ENCODE measurements at regions of chr17 and their contacts with region 1.

Region 1: GRCh38 chr17:82351716-82352488 is 7.1 kb upstream of the TEX19 start:
- DNase-seq: peak; percentile 78 to 91 (median 84)
- ATAC-seq: peak; percentile 84
- H3K4me3 ChIP-seq: no peak overlapping the region
- H3K27ac ChIP-seq: no peak overlapping the region
- H3K4me1 ChIP-seq: peaks cover 5 to 6% of the 10 kb centered on the region in 2 donors
- H3K27me3 ChIP-seq: peaks cover 0 to 46% of the 10 kb centered on the region in 2 donors
- CTCF ChIP-seq: peak; percentile 87 to 98

Region 2: DNA sequence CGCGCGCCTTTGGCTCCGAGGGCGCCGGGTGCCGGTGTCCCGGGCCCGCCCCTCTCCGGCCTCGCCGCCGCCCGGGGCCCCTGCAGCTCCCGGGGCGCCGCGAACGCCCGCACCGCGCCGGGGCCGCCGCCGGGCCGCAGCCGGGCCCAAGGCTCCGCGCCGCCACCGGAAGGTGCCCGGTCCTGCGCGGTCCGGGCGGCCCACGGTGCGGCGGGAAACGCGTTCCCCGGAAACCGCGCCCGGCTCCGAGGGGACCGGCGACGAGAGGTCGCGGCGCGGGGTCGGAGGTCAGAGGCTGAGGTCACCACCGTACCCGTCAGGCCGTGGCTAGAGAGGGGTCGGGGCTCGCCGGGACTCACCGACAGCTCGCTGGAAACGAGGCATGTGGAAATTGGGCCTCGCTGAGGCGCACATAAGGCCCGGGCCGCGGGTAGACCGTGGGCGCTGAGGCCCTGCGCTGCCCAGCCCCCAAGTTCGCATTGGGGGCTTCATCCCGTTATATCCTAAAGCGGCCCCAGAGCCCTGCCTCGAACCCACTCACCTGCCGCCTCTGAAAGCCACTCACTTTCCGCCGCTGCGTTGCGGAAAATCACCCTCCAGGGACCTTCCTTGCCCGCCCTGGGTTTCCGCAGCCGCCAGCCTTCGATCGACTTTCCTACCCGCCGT is 286.1 kb before region 1 on chr17 and contains the start of gene DUS1L:
- intact Hi-C with region 1: no loop called
- DNase-seq: peak; percentile 48 to 90 (median 57)
- ATAC-seq: peak; percentile 90
- H3K4me3 ChIP-seq: peak within 1 kb of the TSS; percentile 76 to 91
- H3K27ac ChIP-seq: peak within 1 kb of the TSS; percentile 66 to 83
- H3K4me1 ChIP-seq: peaks cover 18 to 28% of the 10 kb centered on the region in 2 donors
- H3K27me3 ChIP-seq: no peaks in the 10 kb centered on the region
- CTCF ChIP-seq: no peak
- polyA plus RNA-seq, gene DUS1L: 55.7 to 95.8 (median 69.4) TPM

Region 3: GRCh38 chr17:82281502-82282238 is 70.2 kb before region 1 on chr17:
- intact Hi-C with region 1: no loop called
- DNase-seq: peak in 2 of 4 donors; percentile 69 to 84
- ATAC-seq: peak; percentile 92
- H3K4me3 ChIP-seq: no peak overlapping the region
- H3K27ac ChIP-seq: no peak overlapping the region
- H3K4me1 ChIP-seq: peaks cover 0 to 36% of the 10 kb centered on the region in 2 donors
- H3K27me3 ChIP-seq: no peaks in the 10 kb centered on the region
- CTCF ChIP-seq: no peak

Region 4: GRCh38 chr17:82292251-82293154 is 59.4 kb before region 1 on chr17:
- intact Hi-C with region 1: no loop called
- DNase-seq: peak; percentile 92 to 97 (median 95)
- ATAC-seq: peak; percentile 89
- H3K4me3 ChIP-seq: peak overlapping the region; percentile 79 to 85
- H3K27ac ChIP-seq: peak overlapping the region; percentile 92
- H3K4me1 ChIP-seq: peaks cover 4 to 68% of the 10 kb centered on the region in 2 donors
- H3K27me3 ChIP-seq: no peaks in the 10 kb centered on the region
- CTCF ChIP-seq: no peak

Region 5: DNA sequence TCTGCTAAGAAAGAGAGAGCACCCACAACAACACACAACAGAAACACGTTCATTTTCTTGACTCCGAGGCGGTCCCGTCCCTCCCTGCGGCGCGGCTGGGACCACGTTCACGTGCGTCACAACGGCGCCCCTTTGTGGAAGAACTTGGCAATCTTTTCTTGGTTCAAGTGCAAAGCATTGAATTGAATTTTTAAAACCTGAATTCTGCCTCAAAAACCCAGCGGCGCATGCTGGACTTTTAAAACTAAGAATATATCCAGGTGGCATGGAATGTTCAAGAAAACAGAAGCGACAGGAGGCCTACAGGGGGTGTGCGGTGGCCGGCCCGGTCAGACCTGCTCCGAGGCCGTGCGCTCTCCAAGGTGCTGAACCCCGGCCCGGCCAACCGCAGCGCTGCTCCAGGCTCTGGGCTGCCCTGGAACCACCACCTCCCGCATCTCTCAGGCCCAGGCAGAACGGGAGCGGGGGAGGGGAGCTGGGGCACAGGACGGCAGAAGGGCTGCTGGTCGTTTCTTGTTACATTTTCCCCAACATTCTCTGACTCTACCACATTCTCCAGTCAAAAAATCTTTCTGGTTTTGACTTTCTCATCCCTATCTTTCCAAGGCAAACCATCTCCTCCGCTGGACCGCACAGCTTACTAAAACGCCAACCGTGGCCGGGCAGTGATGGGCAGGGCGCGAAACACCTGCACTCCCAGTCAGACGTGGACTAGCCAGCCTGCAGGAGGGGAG is 62.8 kb after region 1 on chr17:
- intact Hi-C with region 1: loop called in 1 of 2 experiments (anchors 5 kb)
- DNase-seq: peak; percentile 67 to 92 (median 73)
- ATAC-seq: peak; percentile 71
- H3K4me3 ChIP-seq: no peak overlapping the region
- H3K27ac ChIP-seq: no peak overlapping the region
- H3K4me1 ChIP-seq: peaks cover 8 to 26% of the 10 kb centered on the region in 2 donors
- H3K27me3 ChIP-seq: no peaks in the 10 kb centered on the region
- CTCF ChIP-seq: peak; percentile 49 to 68

Region 6: GRCh38 chr17:82551779-82552457 is 200.0 kb after region 1 on chr17:
- intact Hi-C with region 1: loop called in 1 of 2 experiments (anchors 5 kb)
- DNase-seq: peak in 3 of 4 donors; percentile 74 to 93 (median 82)
- ATAC-seq: peak; percentile 91
- H3K4me3 ChIP-seq: no peak overlapping the region
- H3K27ac ChIP-seq: no peak overlapping the region
- H3K4me1 ChIP-seq: peaks cover 33 to 70% of the 10 kb centered on the region in 2 donors
- H3K27me3 ChIP-seq: no peaks in the 10 kb centered on the region
- CTCF ChIP-seq: peak; percentile 55 to 72

Region 7: GRCh38 chr17:82793974-82794630 is 442.2 kb after region 1 on chr17:
- intact Hi-C with region 1: no loop called
- DNase-seq: no peak
- ATAC-seq: no peak
- H3K4me3 ChIP-seq: no peak overlapping the region
- H3K27ac ChIP-seq: no peak overlapping the region
- H3K4me1 ChIP-seq: no peaks in the 10 kb centered on the region
- H3K27me3 ChIP-seq: no peaks in the 10 kb centered on the region
- CTCF ChIP-seq: no peak